ENCODE measurements at regions of chr2 and their contacts with region 1.

Region 1: DNA sequence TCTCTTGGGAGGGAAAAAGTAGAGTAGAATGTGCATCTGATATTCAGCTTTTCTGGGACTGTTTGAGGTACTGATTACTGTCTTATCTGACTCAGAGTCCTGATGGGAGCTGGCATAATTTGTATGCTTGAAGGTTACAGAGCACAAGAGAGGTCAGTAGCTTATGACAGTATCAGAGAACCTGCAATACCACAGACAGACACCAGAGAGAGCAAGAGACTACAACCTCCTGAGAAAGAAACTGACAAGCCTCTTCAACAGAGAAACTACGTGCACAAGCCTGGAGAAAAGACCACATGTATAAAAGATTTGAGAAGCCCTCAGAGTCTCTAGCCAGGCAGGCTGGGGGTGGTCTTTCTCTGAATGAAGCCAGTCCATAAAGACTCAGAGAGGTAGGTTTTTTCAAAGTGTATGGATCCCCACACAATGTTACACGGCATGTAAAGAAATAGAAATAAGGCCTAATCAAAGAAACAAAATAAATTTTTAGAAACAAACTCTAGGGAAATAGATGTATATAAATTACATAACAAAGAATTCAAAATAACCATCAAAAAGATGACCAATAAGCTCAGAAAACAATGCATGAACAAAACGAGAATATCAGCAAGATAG is 568.3 kb downstream of the LRRTM4 start:
- DNase-seq: peak in 2 of 10 donors; percentile 4 to 32

Region 2: GRCh38 chr2:77521931-77522470 is 568.2 kb after region 1 on chr2 and contains the start of gene LRRTM4:
- intact Hi-C with region 1: loop called (anchors 5 kb)
- DNase-seq: peak in 9 of 10 donors; percentile 30 to 88 (median 48)

Measured in posterior cingulate gyrus (tissue), 11 donors.